PC-9 (cell line): ENCODE measurements at regions of chr5 and their contacts with region 1.

Region 1: DNA sequence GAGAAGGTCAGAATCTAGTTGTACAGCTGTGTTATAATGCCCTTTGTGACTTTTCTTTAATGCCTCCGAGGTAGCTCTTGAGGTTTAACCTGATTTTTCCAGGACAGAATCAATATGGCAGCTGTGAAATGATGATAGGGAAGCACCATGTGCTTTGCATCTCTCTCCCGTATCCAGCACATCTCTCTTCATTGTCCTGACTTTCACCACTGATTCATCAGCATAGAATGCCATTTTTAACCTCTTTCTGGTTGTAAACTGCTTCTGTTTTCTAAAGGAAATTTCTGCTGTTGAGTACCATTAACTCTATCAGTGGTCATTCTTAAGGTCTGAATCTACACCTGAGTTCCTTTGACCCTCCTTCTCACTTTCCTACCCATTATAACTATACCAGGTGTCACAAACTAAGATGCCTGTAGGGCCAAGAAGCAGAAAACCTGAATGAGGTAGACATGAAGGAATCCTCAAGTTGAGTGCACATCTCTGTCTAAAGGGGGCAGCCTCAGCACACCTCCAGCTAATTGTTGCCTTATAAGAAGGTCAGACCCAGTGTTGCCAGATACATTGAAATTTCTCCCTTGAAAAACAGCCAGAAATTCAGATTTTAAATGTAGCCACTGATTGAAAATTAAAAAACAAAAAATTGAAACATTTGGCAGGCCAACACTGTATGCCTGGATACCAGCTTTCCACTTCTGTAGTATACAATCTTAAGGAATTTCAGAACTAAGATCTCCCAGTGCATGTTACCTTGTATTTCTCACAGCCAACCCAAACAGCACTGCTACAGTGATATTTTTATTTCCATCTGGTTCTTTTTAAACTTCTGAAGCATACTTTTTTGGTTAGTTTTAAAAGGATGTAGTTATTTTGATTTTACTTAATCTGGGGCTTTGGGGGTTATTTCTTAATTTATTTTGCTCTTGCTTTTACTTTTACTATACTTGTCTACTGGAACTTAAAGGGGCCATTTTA is 35.8 kb upstream of the TLX3 start:
- DNase-seq: peak in 1 of 2 experiments; percentile 14
- H3K4me3 ChIP-seq: no peak overlapping the region
- H3K27ac ChIP-seq: no peak overlapping the region
- H3K4me1 ChIP-seq: peaks cover 22% of the 10 kb centered on the region
- H3K27me3 ChIP-seq: no peaks in the 10 kb centered on the region
- CTCF ChIP-seq: peak; percentile 48; the same call in 1 of the 2 replicates

Region 2: DNA sequence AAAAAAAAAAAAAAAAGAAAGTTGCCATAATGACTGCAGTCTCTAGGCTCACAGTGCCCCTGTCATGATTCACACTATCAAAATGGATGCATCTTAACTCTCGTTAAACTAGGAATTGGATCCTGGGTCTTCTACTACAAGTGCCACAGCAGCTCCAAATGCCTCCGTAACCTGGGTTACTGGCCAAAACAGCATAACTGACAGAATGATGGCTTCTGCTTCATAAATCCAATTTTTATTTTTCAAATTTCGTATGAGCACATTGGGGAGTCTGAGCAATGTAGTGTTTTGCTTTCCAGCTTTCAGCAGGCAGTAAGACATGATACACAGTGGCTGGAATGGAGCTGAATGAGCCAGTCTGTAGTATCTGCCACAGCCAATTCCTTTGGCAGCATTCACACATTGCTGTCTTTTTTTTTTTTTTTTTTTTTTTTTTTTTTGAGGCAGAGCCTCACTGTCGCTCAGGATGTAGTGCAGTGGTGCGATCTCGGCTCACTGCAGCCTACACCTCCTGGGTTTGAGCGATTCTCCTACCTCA is 78.3 kb after region 1 on chr5:
- CTCF ChIA-PET with region 1: interaction called, 16 read pairs
- POLR2A ChIA-PET with region 1: no interaction called
- intact Hi-C with region 1: no loop called
- DNase-seq: no peak
- H3K4me3 ChIP-seq: no peak overlapping the region
- H3K27ac ChIP-seq: no peak overlapping the region
- H3K4me1 ChIP-seq: no peaks in the 10 kb centered on the region
- H3K27me3 ChIP-seq: no peaks in the 10 kb centered on the region
- CTCF ChIP-seq: no peak